ENCODE measurements at regions of chr7 and their contacts with region 1.

Region 1: DNA sequence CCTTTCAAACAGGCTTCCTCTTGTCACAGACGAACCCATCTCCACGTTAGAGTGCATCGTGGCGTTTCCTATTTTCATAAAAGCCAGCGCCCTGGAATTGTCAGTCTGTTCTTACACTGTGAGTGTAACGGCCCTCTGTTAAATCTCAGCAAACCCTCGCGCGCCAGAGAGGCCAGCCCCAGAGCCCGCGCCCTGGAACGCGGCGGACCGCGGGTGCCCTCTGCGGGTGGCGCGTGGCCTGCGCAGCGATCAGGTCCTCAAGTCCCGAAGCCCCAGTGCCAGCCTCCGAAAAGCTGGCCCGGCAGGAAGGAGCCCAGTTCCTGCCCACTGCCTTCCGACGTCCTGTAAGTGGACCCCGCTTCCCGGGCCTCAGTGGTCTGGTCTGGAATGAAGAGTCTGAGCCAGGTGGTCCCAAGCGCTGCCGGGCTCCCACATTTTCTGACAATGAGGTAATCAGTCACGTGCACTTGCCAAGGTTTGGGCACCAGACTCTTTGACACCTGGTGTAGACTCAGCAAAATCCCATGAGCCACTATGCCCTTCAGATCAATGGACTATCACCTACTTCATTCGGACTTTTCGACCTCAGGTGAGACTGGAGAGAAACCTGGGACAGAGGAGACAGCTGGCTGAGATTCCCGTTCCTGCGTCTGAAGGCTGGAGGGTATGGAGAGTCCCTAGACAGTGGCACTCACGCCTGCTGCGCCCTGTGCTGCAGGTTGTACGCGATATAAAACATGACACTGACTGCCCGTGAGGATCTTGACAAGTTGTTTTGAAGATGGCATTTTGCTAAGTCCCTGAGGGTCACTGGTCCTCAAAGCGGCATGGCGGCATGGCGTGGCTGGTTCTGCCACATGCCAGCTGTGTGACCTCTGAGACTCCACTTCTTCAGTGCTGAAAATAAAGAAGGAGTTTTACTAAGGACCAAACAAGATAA is 109.4 kb upstream of the LANCL2 start:
- DNase-seq: peak; percentile 68
- ATAC-seq: peak; percentile 89
- H3K4me3 ChIP-seq: peak overlapping the region; percentile 44
- H3K27ac ChIP-seq: peak overlapping the region; percentile 19; the same call in 1 of the 2 replicates
- H3K4me1 ChIP-seq: peaks cover 5% of the 10 kb centered on the region; the same call in 1 of the 2 replicates
- H3K27me3 ChIP-seq: peaks cover 3% of the 10 kb centered on the region
- CTCF ChIP-seq: peak; percentile 95
- POLR2A ChIP-seq: no peak
- RAD21 ChIP-seq: peak; percentile 94

Region 2: DNA sequence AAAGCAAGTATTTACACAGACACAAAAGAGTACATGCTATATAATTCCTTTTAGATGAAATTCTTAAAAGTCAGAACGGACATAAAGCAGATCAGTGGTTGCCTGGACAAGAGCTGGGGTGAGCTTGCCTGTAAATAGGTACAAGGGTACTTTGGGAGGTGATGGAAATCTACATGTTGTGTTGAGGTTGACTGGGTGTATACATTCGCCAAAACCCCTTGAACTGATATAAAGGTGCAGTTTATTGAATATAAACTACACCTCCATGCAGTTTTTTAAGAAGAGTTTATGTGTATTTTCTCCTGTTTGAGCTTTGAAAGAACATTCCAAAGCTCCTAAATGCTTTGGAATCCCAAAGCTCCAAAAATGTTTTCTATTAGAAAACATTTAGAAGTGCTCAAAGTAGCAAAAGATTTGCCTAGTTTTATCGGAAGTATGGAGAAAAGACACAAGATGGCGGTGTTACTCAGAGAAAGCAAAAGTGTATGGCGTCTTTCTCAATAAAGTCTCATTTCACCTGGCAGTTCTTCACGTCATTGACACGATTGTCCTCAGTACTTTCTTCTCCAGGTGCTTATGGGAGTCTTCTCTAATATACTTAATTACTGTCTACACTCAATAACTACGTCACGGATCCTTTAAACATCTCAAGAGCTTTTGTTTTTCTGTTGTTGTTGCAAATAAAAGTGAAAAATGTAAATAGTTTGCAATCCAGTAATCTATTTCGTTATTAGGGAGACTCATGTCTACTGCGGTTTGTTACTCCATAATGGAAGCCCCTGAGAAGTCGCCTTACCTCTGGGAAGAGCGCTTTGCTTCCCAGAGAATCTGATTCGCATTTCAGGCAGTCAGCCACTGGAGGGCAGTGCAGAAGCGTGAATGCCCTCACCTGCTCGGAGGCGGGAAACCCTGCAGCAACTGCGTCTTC is 482.0 kb before region 1 on chr7:
- CTCF ChIA-PET with region 1: interaction called, 42 read pairs
- POLR2A ChIA-PET with region 1: no interaction called
- dilution Hi-C with region 1: no loop called
- in situ Hi-C with region 1: loop called (anchors 5 kb)
- intact Hi-C with region 1: loop called (anchors 1 kb)
- DNase-seq: peak; percentile 84
- ATAC-seq: peak; percentile 95
- H3K4me3 ChIP-seq: peak overlapping the region; percentile 31; the same call in 1 of the 2 replicates
- H3K27ac ChIP-seq: no peak overlapping the region
- H3K4me1 ChIP-seq: no peaks in the 10 kb centered on the region
- H3K27me3 ChIP-seq: no peaks in the 10 kb centered on the region
- CTCF ChIP-seq: peak; percentile 92
- POLR2A ChIP-seq: peak; percentile 53; the same call in 1 of the 2 replicates
- RAD21 ChIP-seq: peak; percentile 99

Region 3: DNA sequence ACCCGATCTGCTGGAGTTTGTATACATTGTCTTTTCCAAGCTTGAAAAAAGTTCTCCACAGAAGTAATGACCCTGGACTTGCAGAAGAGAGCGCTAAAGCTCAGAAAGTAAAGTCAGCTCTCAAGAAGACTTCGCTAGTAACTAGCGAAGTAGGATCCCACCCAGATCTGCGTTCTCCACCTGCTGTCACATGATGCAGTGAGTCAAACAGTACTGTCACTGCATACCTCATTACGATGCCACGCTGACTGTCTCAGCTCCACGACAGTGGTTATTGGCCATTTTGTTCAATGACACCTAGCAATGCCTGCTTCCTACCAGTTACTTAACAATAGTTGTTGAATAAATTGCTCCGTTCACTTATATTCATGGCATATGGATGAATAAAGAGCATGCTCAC is 467.1 kb before region 1 on chr7:
- CTCF ChIA-PET with region 1: interaction called, 29 read pairs
- POLR2A ChIA-PET with region 1: no interaction called
- dilution Hi-C with region 1: no loop called
- in situ Hi-C with region 1: no loop called
- intact Hi-C with region 1: loop called (anchors 1 kb)
- DNase-seq: peak; percentile 96
- ATAC-seq: peak; percentile 98
- H3K4me3 ChIP-seq: no peak overlapping the region; the same call in 1 of the 2 replicates
- H3K27ac ChIP-seq: no peak overlapping the region
- H3K4me1 ChIP-seq: peaks cover 2% of the 10 kb centered on the region; the same call in 1 of the 2 replicates
- H3K27me3 ChIP-seq: no peaks in the 10 kb centered on the region
- CTCF ChIP-seq: peak; percentile 96
- POLR2A ChIP-seq: peak; percentile 46; the same call in 1 of the 2 replicates
- RAD21 ChIP-seq: peak; percentile 96

Region 4: DNA sequence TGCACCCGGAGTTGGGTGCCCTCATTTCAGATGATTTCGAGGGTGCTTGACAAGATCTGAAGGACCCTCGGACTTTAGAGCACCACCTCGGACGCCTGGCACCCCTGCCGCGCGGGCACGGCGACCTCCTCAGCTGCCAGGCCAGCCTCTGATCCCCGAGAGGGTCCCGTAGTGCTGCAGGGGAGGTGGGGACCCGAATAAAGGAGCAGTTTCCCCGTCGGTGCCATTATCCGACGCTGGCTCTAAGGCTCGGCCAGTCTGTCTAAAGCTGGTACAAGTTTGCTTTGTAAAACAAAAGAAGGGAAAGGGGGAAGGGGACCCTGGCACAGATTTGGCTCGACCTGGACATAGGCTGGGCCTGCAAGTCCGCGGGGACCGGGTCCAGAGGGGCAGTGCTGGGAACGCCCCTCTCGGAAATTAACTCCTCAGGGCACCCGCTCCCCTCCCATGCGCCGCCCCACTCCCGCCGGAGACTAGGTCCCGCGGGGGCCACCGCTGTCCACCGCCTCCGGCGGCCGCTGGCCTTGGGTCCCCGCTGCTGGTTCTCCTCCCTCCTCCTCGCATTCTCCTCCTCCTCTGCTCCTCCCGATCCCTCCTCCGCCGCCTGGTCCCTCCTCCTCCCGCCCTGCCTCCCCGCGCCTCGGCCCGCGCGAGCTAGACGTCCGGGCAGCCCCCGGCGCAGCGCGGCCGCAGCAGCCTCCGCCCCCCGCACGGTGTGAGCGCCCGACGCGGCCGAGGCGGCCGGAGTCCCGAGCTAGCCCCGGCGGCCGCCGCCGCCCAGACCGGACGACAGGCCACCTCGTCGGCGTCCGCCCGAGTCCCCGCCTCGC is 237.2 kb before region 1 on chr7 and contains the start of gene EGFR:
- CTCF ChIA-PET with region 1: interaction called, 14 read pairs
- POLR2A ChIA-PET with region 1: no interaction called
- dilution Hi-C with region 1: no loop called
- in situ Hi-C with region 1: loop called (anchors 10 kb)
- intact Hi-C with region 1: loop called (anchors 2 kb)
- DNase-seq: peak; percentile 80
- ATAC-seq: peak; percentile 94
- H3K4me3 ChIP-seq: peak within 1 kb of the TSS; percentile 98
- H3K27ac ChIP-seq: peak within 1 kb of the TSS; percentile 97
- H3K4me1 ChIP-seq: peaks cover 13% of the 10 kb centered on the region
- H3K27me3 ChIP-seq: no peaks in the 10 kb centered on the region
- CTCF ChIP-seq: no peak
- POLR2A ChIP-seq: peak; percentile 77
- RAD21 ChIP-seq: no peak
- total RNA-seq, gene EGFR: 60.4 and 63.9 TPM in 2 replicates

Region 5: GRCh38 chr7:55158541-55159382 is 97.0 kb before region 1 on chr7:
- CTCF ChIA-PET with region 1: interaction called, 3 read pairs
- POLR2A ChIA-PET with region 1: no interaction called
- dilution Hi-C with region 1: no loop called
- in situ Hi-C with region 1: no loop called
- intact Hi-C with region 1: loop called (anchors 5 kb)
- DNase-seq: peak; percentile 69
- ATAC-seq: peak; percentile 15; the same call in 1 of the 2 replicates
- H3K4me3 ChIP-seq: no peak overlapping the region
- H3K27ac ChIP-seq: peak overlapping the region; percentile 43
- H3K4me1 ChIP-seq: peaks cover 25% of the 10 kb centered on the region
- H3K27me3 ChIP-seq: no peaks in the 10 kb centered on the region
- CTCF ChIP-seq: no peak
- POLR2A ChIP-seq: no peak
- RAD21 ChIP-seq: no peak

Region 6: GRCh38 chr7:55265836-55266642 is 10.3 kb after region 1 on chr7:
- CTCF ChIA-PET with region 1: interaction called, 16 read pairs
- POLR2A ChIA-PET with region 1: no interaction called
- dilution Hi-C with region 1: no loop called
- in situ Hi-C with region 1: no loop called
- intact Hi-C with region 1: no loop called
- DNase-seq: peak; percentile 27
- ATAC-seq: peak; percentile 51; the same call in 1 of the 2 replicates
- H3K4me3 ChIP-seq: no peak overlapping the region
- H3K27ac ChIP-seq: no peak overlapping the region
- H3K4me1 ChIP-seq: peaks cover 2% of the 10 kb centered on the region; the same call in 1 of the 2 replicates
- H3K27me3 ChIP-seq: peaks cover 33% of the 10 kb centered on the region
- CTCF ChIP-seq: no peak
- POLR2A ChIP-seq: no peak
- RAD21 ChIP-seq: no peak